Stomach (tissue), 19 donors: ENCODE measurements at regions of chr17 and their contacts with region 1.

Region 1: GRCh38 chr17:983921-984320 is 4.3 kb upstream of the NXN start:
- DNase-seq: peak in 1 of 2 donors; percentile 57
- H3K4me3 ChIP-seq: no peak overlapping the region
- H3K27ac ChIP-seq: no peak overlapping the region
- H3K4me1 ChIP-seq: peaks cover 10 to 17% (median 13%) of the 10 kb centered on the region in 4 donors
- H3K27me3 ChIP-seq: no peaks in the 10 kb centered on the region
- CTCF ChIP-seq: no peak
- EP300 ChIP-seq: no peak
- POLR2A ChIP-seq: no peak

Region 2: DNA sequence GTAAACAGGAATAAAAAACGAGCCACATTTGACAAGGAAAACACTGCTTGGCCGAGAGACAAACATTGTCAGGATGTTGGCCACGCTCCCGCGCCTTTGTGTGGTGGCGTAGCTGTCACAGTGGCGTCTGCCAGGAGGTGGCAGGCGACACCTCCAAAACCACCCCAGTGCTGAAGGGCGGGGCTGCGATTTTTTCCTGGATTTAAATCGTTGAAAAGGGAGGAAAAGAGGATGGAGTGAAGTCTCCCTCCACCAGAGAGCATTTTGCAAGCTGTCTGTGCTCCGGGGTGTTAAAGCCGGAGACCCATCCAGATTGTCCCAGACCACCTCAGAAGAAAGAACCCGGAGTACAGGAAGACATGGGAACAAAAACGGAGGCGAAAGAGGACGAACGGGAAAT is 189.0 kb before region 1 on chr17:
- intact Hi-C with region 1: loop called (anchors 2 kb)
- DNase-seq: peak; percentile 92
- H3K4me3 ChIP-seq: peak overlapping the region; percentile 19 to 39 (median 29)
- H3K27ac ChIP-seq: peak overlapping the region; percentile 53 to 85 (median 67)
- H3K4me1 ChIP-seq: peaks cover 11 to 39% (median 22%) of the 10 kb centered on the region in 4 donors
- H3K27me3 ChIP-seq: no peaks in the 10 kb centered on the region
- CTCF ChIP-seq: peak in 6 of 7 experiments; percentile 40 to 93 (median 78)
- EP300 ChIP-seq: no peak
- POLR2A ChIP-seq: no peak

Region 3: GRCh38 chr17:1078831-1079561 is 95.1 kb after region 1 on chr17:
- intact Hi-C with region 1: no loop called
- DNase-seq: peak in 1 of 2 donors; percentile 85
- H3K4me3 ChIP-seq: no peak overlapping the region
- H3K27ac ChIP-seq: peak overlapping the region in 1 of 5 donors; percentile 8
- H3K4me1 ChIP-seq: peaks cover 41 to 63% (median 58%) of the 10 kb centered on the region in 4 donors
- H3K27me3 ChIP-seq: no peaks in the 10 kb centered on the region
- CTCF ChIP-seq: no peak
- EP300 ChIP-seq: no peak
- POLR2A ChIP-seq: no peak